Left lung (tissue), 14 donors: ENCODE measurements at regions of chr12 and their contacts with region 1.

Region 1: DNA sequence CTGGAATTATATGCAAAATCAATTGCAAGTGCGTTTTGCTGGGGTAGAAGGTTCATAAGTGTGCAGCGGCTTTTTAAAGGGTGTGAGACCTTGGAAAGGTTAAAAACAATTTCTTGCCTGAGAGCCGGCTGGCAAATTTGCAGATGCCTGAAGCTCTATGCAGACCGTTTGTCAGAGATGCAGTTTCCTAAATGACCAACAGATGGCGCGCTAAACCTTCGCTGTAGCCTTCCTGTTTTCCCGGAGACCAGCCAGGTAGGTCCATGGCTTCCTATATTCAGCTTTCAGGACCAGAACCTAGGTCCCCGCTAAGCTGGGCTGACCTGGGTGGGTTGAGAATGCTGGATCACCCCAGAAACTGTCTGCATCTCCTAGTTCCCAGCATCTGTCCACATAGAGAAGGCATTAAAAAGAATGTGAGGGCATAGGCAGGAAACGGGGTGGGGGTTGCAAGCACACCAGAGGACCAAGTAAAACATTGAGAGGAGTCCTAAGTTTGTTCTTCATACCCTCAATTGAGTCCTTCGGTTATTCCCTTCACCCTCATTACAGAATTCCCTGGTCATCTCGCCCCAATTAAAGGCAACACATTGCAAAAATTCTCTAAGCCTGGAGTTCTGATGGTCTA is 5.7 kb upstream of the NOS1 start:
- DNase-seq: peak in 3 of 4 donors; percentile 39 to 79 (median 58)
- ATAC-seq: peak; percentile 95
- H3K4me3 ChIP-seq: no peak overlapping the region
- H3K27ac ChIP-seq: no peak overlapping the region
- H3K4me1 ChIP-seq: no peaks in the 10 kb centered on the region
- H3K27me3 ChIP-seq: peaks cover 1 to 46% of the 10 kb centered on the region in 2 donors
- CTCF ChIP-seq: peak; percentile 78 to 88

Region 2: DNA sequence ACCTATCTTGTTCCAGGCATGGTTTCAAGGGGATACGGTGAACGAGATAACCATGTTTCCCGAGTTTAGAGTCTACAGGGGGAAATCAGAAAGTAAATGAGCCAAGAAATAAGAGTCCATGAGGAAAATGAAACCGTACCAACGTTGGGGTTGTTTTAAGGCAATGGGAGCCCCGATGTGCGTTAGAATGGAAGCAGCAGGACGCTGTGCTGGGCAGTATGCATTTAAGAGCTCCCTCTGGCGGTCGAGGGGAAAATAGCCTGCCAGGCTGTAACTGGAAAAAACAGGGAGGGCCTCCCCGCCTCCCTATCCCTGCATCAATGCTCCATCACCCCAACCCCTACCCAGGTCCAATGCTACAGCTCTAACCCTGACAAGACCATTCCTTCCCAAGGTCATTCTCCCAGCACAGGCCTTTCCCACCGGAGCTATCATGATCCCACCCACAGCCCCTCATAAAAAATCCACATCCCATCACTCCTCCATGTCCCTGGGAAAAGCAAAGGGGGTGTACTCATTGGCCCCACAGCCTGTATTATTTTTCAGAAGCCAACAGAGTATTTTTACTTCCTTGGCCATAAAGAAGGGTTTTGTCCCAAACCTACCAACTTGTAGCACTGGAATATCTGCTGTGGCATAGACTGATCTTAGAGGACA is 220.6 kb after region 1 on chr12:
- intact Hi-C with region 1: loop called in 1 of 2 experiments (anchors 5 kb)
- DNase-seq: peak; percentile 15 to 68 (median 37)
- ATAC-seq: peak; percentile 90
- H3K4me3 ChIP-seq: no peak overlapping the region
- H3K27ac ChIP-seq: no peak overlapping the region
- H3K4me1 ChIP-seq: no peaks in the 10 kb centered on the region
- H3K27me3 ChIP-seq: peaks cover 0 to 38% of the 10 kb centered on the region in 2 donors
- CTCF ChIP-seq: peak; percentile 76 to 78

Region 3: GRCh38 chr12:117742721-117743120 is 375.6 kb after region 1 on chr12:
- intact Hi-C with region 1: no loop called
- DNase-seq: no peak
- ATAC-seq: no peak
- H3K4me3 ChIP-seq: no peak overlapping the region
- H3K27ac ChIP-seq: no peak overlapping the region
- H3K4me1 ChIP-seq: no peaks in the 10 kb centered on the region
- H3K27me3 ChIP-seq: no peaks in the 10 kb centered on the region
- CTCF ChIP-seq: no peak

Region 4: GRCh38 chr12:117836999-117837736 is 470.0 kb after region 1 on chr12:
- intact Hi-C with region 1: loop called in 1 of 2 experiments (anchors 5 kb)
- DNase-seq: peak; percentile 50 to 88 (median 71)
- ATAC-seq: peak; percentile 90
- H3K4me3 ChIP-seq: no peak overlapping the region
- H3K27ac ChIP-seq: no peak overlapping the region
- H3K4me1 ChIP-seq: no peaks in the 10 kb centered on the region
- H3K27me3 ChIP-seq: peaks cover 0 to 32% of the 10 kb centered on the region in 2 donors
- CTCF ChIP-seq: peak; percentile 90 to 93